Stomach (tissue), 19 donors: ENCODE measurements at regions of chr17 and their contacts with region 1.

Region 1: DNA sequence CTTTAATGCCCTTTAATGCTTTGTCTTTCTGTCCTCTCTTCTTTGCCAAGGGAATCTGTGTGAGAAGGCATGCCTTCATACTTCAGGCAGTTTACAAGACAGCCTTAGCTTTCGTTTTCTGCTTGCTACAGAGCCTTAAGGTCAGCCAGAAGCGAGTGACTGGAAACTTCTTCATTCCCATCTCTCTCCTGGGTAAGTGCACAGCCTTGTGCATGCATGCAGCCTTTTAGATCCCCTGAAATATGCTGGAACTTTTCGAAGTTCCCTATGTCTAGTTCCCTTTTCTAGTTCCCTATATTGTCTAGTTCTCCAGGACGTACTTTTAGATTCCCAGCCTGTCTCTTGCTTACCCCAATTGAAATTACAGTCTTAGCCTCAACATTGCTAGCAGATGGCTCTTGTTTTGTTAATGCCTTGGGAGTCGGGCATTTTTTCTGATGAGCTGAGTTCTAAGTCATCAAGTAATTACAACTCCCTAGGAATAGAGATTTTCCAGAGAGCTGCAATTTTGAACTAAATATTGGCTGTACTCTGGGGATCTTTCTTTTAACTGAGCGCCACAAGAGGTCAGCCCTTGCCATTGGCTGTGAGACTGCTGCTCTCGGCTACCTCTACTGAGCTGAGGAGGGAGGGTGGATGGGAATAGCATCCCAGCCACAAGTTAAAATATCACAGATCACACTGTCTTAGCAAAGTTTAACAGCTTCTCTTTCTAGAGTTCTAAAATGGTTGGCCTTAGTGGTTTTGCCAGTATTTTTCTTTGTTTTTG is 22.7 kb upstream of the PPM1D start:
- DNase-seq: peak in 1 of 2 donors; percentile 76
- H3K4me3 ChIP-seq: peak overlapping the region; percentile 37 to 41 (median 40)
- H3K27ac ChIP-seq: peak overlapping the region; percentile 45 to 81 (median 73)
- H3K4me1 ChIP-seq: peaks cover 7 to 34% (median 17%) of the 10 kb centered on the region in 4 donors
- H3K27me3 ChIP-seq: no peaks in the 10 kb centered on the region
- CTCF ChIP-seq: peak in 1 of 7 experiments; percentile 13
- EP300 ChIP-seq: no peak
- POLR2A ChIP-seq: no peak

Region 2: GRCh38 chr17:60525685-60526514 is 51.4 kb before region 1 on chr17 and contains the start of gene APPBP2:
- intact Hi-C with region 1: no loop called
- DNase-seq: peak; percentile 89 to 97
- H3K4me3 ChIP-seq: peak within 1 kb of the TSS; percentile 81 to 97 (median 94)
- H3K27ac ChIP-seq: peak within 1 kb of the TSS; percentile 97 to 100 (median 99)
- H3K4me1 ChIP-seq: peaks cover 29 to 53% (median 40%) of the 10 kb centered on the region in 4 donors
- H3K27me3 ChIP-seq: no peaks in the 10 kb centered on the region
- CTCF ChIP-seq: no peak
- EP300 ChIP-seq: no peak
- POLR2A ChIP-seq: peak in 2 of 4 donors; percentile 13 to 49
- total RNA-seq, gene APPBP2: 14.8 to 55.8 (median 26.4) TPM

Region 3: GRCh38 chr17:60630352-60630751 is 53.0 kb after region 1 on chr17:
- intact Hi-C with region 1: loop called (anchors 10 kb)
- DNase-seq: peak in 1 of 2 donors; percentile 28
- H3K4me3 ChIP-seq: no peak overlapping the region
- H3K27ac ChIP-seq: no peak overlapping the region
- H3K4me1 ChIP-seq: no peaks in the 10 kb centered on the region
- H3K27me3 ChIP-seq: no peaks in the 10 kb centered on the region
- CTCF ChIP-seq: no peak
- EP300 ChIP-seq: no peak
- POLR2A ChIP-seq: no peak